Left ventricle myocardium superior (tissue), 1 donor: ENCODE measurements at regions of chr1 and their contacts with region 1.

Region 1: GRCh38 chr1:181479137-181479745 is 4.1 kb upstream of the CACNA1E start:
- DNase-seq: peak; percentile 50
- ATAC-seq: peak; percentile 93

Region 2: DNA sequence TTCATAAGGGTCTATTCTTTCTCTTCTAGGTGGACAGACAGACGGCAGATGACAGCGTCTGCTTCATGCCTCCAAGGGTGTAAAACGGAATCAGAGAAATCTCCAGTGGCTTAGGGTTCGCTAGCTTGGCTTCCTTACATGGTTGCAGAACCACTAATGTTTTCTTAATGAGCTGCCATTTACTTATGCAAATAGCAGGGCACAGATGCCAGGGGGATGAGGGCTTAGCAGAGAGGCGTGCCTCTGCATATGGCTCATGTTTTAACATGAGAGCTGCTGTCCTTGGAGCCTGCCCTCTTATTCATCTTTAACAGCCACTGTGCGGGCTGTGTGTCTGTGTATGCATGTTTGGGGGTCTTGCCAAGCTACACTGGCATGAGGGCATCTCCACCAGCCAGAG is 271.2 kb before region 1 on chr1:
- intact Hi-C with region 1: no loop called
- DNase-seq: no peak
- ATAC-seq: no peak

Region 3: DNA sequence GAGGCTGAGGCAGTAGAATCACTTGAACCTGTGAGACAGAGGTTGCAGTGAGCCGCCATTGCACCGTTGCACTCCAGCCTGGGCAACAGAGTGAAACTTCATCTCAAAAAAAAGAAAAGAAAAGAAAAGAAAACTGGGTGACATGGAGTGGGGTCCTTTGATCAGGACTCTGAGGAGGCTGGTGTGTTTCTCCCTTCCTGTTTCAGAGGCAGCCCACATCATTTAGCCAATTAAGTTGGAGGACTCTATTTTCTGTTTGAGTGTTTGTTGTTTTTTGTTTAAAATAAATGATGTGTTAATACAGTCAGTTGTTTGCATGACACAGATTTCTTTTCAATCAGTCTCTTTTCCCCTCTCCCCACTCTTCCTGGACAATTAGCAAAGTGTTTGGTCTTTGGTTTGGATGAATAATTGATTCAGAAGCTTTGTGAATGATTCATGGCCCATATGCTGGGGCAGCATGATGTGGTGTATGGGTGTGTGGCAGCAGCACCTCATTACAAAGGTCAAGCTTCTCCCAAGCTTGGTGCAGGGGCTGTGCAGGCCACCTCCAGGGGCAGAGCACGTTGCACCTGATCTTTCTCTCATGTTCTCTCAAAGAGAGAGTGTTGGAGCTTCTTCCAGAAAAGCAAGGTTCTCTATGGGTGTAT is 52.8 kb after region 1 on chr1:
- intact Hi-C with region 1: no loop called
- DNase-seq: no peak
- ATAC-seq: no peak

Region 4: DNA sequence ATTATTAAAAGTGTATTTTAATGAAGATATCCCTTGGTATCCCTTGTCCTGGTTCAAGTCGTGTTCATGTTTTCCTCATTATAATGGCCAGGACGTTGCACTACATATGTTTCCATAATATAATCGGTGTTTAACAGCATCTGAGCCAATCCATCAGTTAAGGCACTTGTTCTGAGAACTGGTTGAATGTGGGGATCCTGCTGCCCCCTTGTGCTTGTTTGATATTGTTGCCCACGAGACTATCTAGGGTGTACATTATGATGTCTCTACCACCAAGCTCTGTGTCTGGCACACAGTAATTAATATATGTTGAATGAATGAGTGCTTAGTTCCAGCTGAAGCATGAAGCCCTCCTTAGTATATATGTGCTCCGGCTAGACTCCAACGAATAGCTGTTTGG is 197.0 kb after region 1 on chr1:
- intact Hi-C with region 1: loop called (anchors 5 kb)
- DNase-seq: no peak
- ATAC-seq: peak; percentile 43

Region 5: DNA sequence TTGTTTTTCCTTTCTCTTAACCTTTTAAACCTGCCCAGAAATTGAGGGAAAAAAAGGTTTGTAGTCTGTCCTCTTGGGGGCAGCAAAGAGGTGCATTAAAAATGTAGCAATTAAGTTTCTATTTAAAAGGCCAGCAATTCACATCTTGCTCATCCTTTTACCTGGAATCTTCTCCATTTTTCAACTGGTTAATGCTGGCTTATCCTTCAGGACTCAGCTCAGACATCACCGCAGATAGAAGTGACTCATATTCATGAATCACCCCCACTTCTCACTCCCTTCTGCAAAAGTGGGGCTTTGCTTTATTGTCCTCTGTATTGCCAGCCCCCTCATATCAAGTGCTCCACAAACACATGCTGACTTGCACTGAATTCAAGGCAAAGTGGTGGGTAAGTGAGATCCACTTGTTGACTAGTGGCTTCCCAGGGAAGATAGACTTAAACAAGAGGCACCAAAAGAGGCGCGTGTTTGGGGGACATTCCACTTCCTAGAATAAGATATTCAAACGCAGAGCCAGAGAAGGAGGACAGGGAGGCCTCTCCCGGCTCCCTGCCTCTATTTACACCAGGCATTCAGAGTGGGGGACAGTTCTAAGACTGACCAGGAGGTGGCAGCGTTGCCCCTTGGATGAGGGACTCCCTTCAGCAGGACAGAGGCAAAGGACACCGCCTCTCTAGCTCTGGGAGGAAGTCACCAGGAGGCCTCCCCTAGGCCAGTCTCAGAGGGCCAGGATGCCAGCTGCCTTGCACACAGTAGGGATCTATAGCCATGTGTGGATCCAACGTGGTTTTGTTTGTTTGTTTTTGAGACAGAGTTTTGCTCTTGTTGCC is 605.5 kb after region 1 on chr1:
- intact Hi-C with region 1: loop called (anchors 2 kb)
- DNase-seq: peak; percentile 89
- ATAC-seq: peak; percentile 96